GM23248 (cell line): ENCODE measurements at regions of chr4 and their contacts with region 1.

Region 1: DNA sequence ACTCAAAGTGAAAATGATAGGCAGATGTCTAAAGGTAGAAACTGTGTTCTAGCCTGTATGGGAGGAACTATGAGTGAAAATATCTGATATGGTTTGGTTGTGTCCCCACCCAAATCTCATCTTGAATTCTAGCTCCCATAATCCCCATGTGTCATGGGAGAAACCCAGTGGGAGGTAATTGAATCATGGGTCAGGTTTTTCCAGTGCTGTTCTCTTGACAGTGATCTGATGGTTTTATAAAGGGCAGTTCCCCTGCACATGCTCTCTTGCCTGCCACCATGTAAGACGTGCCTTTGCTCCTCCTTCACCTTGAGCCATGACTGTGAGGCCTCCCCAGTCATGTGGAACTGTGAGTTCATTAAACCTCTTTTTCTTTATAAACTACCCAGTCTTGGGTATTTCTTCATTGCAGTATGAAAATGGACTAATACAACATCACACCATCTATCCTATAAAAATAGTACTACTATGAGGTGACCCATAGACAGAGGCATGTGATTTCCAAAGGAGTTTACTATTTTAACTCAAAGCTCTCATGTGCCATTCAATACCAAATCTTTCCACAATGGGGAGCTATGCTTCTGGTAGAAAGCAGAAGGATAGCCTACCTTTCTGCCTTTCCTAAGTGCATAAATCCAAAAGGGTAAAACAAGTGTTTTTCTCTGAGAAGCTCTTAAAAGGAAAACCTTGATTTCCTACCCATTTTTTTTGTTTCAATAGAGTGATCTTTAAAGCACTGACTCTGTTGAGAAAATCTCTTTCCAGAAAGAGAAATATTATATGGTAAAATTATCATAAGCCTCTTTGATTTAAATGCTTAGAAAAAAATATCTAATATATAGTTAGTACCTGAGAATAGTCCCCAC is 38.8 kb downstream of the SEC31A start:
- DNase-seq: peak; percentile 61
- H3K4me3 ChIP-seq: no peak overlapping the region
- H3K27ac ChIP-seq: peak overlapping the region; percentile 25; the same call in 1 of the 2 replicates
- H3K4me1 ChIP-seq: no peaks in the 10 kb centered on the region
- H3K27me3 ChIP-seq: no peaks in the 10 kb centered on the region

Region 2: GRCh38 chr4:81676537-81676936 is 1175.6 kb before region 1 on chr4:
- in situ Hi-C with region 1: no loop called
- DNase-seq: no peak
- H3K4me3 ChIP-seq: no peak overlapping the region
- H3K27ac ChIP-seq: no peak overlapping the region
- H3K4me1 ChIP-seq: no peaks in the 10 kb centered on the region
- H3K27me3 ChIP-seq: 0 out of 2 replicates have a peak, but pooled peaks cover 4% of the 10 kb centered on the region

Region 3: DNA sequence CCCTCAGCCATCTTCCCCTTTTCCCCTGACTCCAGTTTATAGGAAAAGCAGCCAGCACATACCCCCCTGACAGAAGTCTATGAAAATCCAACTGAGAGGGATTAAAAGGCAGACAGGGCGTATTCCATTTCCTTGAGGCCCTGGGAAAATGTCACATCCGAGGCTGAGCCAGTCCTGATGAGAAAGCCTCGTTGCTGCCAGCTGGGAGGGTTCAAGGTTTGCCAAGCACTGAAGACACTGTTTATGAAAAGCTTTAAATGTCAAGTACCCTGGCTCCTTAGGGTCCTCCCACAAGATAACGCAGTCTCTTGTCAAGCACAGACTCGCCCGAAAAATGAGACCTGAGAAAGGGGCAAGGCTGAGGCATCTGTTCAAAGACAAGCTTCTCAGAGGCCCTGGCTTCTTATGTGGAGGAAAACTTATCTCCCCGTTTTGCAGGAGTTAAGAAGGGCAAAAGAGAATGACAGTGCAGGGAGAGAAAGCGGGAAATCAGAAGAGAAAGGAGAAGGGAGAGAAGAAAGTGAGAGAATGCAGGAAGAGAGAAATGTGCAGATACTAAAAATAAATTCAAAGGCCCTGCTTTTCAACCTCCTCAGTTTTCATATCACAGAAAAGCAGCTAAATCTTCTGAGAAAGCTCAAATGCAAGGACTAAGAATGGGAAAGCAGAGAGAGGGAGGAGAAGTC is 98.2 kb before region 1 on chr4:
- in situ Hi-C with region 1: loop called (anchors 25 kb)
- DNase-seq: peak; percentile 60
- H3K4me3 ChIP-seq: no peak overlapping the region
- H3K27ac ChIP-seq: peak overlapping the region; percentile 57
- H3K4me1 ChIP-seq: peaks cover 21% of the 10 kb centered on the region
- H3K27me3 ChIP-seq: no peaks in the 10 kb centered on the region

Region 4: GRCh38 chr4:83252782-83253405 is 400.8 kb after region 1 on chr4:
- in situ Hi-C with region 1: loop called (anchors 25 kb)
- DNase-seq: peak; percentile 74
- H3K4me3 ChIP-seq: no peak overlapping the region
- H3K27ac ChIP-seq: no peak overlapping the region
- H3K4me1 ChIP-seq: peaks cover 12% of the 10 kb centered on the region; the same call in 1 of the 2 replicates
- H3K27me3 ChIP-seq: no peaks in the 10 kb centered on the region